ENCODE measurements at regions of chr3 and their contacts with region 1.

Region 1: DNA sequence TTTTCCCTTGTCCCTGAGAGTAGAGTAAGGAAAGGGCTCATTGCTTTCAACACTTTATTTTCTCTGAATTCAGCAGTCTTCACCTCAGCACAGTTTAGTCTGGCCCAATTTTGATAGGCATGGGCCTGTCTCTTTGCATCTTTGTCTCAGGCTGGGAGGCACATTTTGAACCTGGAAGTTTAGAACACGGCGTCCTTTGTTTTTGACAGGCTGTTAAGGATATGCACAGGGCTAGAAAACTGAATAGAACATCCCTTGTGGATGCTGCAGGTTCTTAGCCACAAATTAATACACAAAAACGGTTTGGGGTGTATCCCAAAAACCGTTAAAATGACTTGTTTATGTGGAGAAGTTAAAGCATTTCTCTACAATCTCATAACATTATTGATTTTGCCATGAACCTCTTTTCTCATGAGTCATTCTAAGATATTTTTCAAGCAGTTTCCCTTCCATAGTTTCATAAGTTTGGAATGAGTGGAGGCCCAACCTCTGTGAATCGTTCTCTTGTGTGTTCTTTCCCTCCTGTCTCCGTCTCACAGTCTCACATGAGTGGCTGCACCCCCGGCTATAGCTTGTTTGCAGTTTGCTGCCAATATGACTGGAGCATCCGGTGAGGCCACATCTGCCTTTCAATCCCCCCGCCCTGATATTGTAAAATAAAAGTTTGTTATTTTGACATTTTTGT is 192.9 kb upstream of the EIF1B start:
- DNase-seq: peak; percentile 74
- H3K4me3 Mint-ChIP-seq: peak overlapping the region; percentile 28
- H3K27ac Mint-ChIP-seq: peak overlapping the region; percentile 86
- H3K4me1 Mint-ChIP-seq: peaks cover 64% of the 10 kb centered on the region
- H3K27me3 Mint-ChIP-seq: no peaks in the 10 kb centered on the region
- CTCF ChIP-seq: no peak

Region 2: GRCh38 chr3:39981547-39982184 is 135.0 kb before region 1 on chr3:
- CTCF ChIA-PET with region 1: no interaction called
- intact Hi-C with region 1: loop called (anchors 5 kb)
- DNase-seq: no peak
- H3K4me3 Mint-ChIP-seq: no peak overlapping the region
- H3K27ac Mint-ChIP-seq: no peak overlapping the region
- H3K4me1 Mint-ChIP-seq: no peaks in the 10 kb centered on the region
- H3K27me3 Mint-ChIP-seq: no peaks in the 10 kb centered on the region
- CTCF ChIP-seq: no peak

Region 3: DNA sequence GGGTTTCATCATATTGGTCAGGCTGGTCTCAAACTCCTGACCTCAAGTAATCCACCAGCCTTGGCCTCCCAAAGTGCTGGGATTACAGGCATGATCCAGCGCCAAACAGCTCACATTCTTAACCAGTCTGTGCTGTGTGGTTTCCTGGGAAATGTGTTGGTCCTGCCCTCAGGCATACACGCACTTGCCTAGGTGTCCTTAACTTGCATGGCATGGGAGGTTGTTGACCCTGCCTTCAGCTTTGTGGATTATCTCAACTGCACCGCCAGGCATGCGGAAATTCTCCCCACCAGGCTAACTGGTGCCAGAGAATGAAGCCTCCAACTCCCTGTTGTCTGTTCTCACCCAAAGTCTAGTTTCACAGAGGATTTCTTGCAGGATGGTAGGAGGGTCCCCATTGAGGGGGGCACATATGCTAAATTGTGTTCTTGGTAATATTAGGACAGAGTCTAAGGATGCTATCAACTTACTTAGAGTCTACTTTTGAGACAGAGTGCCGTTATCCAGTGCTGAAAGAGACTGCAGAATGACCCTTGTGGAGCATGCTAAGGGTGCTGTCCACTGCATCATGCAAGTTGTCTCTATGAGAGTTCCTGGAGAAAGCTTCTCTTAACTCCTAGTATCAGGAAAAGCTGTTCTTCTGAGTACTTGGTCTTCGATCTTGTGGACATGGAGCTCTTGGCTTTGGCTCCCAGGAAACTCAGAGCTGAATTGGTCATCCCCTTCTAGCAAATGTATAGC is 131.3 kb after region 1 on chr3:
- CTCF ChIA-PET with region 1: no interaction called
- intact Hi-C with region 1: no loop called
- DNase-seq: no peak
- H3K4me3 Mint-ChIP-seq: no peak overlapping the region
- H3K27ac Mint-ChIP-seq: no peak overlapping the region
- H3K4me1 Mint-ChIP-seq: no peaks in the 10 kb centered on the region
- H3K27me3 Mint-ChIP-seq: no peaks in the 10 kb centered on the region
- CTCF ChIP-seq: no peak

Region 4: GRCh38 chr3:40382617-40382979 is 266.0 kb after region 1 on chr3:
- CTCF ChIA-PET with region 1: no interaction called
- intact Hi-C with region 1: no loop called
- DNase-seq: no peak
- H3K4me3 Mint-ChIP-seq: no peak overlapping the region
- H3K27ac Mint-ChIP-seq: no peak overlapping the region
- H3K4me1 Mint-ChIP-seq: no peaks in the 10 kb centered on the region
- H3K27me3 Mint-ChIP-seq: no peaks in the 10 kb centered on the region
- CTCF ChIP-seq: no peak

Measured in Calu3 (cell line).